ENCODE measurements at regions of chr12 and their contacts with region 1.

Region 1: GRCh38 chr12:49707128-49707811 is at the start of gene FMNL3:
- DNase-seq: peak; percentile 99
- total RNA-seq, gene FMNL3: 19.8 TPM

Region 2: DNA sequence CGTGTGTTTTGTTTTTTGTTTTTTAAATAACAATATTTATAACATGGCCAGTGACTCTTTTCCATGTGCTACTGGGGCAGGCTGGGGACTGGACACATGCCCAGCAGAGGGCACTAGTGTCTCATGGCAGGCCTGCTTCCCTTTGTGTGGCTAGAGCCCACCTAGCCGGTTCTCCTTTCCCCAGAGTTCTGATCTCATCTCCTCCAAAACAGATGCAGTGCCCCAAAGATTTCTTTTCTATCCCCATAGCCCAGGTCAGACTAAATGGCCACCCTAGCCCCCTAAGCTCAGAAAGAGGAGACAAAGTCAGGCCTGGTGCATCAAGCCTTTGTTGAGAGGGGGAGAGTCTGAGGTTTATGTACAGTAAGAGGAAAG is 62.7 kb before region 1 on chr12:
- intact Hi-C with region 1: loop called (anchors 1 kb)
- DNase-seq: peak; percentile 90

Region 3: GRCh38 chr12:49776413-49776812 is 69.1 kb after region 1 on chr12:
- intact Hi-C with region 1: no loop called
- DNase-seq: no peak